HAP-1 (cell line): ENCODE measurements at regions of chr4 and their contacts with region 1.

Region 1: GRCh38 chr4:163042306-163042705 is 124.4 kb downstream of the NAF1 start:
- DNase-seq: no peak
- H3K4me3 ChIP-seq: no peak overlapping the region
- H3K4me1 ChIP-seq: peaks cover 8% of the 10 kb centered on the region; the same call in 1 of the 2 replicates
- H3K27me3 ChIP-seq: no peaks in the 10 kb centered on the region

Region 2: DNA sequence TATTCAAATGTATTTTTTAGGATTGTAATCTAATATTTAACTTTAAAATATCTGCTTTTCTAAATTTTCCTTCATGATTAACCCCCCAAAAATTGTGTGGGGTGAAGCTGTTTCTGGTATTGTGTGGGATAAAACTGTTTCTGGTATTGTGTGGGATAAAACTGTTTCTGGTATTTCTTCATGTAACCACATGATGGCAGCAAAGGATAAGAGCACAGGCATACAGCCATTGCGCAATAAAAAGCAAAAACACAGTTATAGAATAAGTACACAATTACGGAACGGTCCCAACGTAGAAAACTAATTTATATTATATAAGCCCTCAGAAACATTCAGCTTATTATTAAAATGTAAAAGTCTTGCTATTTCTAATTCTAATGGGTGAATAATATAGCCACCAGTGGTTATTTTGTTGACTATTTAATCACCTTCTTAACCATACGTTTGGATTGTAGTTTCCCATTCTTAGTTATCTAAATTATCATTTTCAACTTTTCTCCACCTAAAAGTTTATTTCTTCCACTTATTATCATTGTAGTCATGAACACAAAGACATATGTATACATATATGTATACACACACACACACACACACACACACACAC is 544.6 kb before region 1 on chr4:
- in situ Hi-C with region 1: loop called (anchors 10 kb)
- DNase-seq: peak in 1 of 2 experiments; percentile 59
- H3K4me3 ChIP-seq: no peak overlapping the region
- H3K4me1 ChIP-seq: no peaks in the 10 kb centered on the region
- H3K27me3 ChIP-seq: no peaks in the 10 kb centered on the region

Region 3: DNA sequence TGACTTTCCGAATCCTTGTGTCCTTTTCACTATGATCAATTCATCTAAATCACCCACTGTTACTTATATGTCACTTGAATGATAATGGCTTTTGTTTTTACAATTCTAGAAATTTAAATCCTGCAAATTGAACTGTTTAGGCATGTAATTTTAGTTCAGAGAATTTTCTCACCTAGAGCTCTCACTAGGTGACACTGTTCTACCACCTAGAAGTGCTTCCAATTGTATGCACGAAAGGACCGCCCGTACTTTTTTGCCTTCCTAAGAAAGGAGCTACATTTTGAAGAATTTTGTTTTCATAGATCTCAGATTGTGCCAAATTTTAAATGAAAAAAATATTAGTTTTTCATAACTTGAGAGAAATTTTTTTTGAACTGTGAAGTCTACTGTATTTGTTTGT is 396.9 kb before region 1 on chr4:
- in situ Hi-C with region 1: loop called (anchors 10 kb)
- DNase-seq: peak; percentile 15 to 20
- H3K4me3 ChIP-seq: no peak overlapping the region
- H3K4me1 ChIP-seq: no peaks in the 10 kb centered on the region
- H3K27me3 ChIP-seq: no peaks in the 10 kb centered on the region

Region 4: DNA sequence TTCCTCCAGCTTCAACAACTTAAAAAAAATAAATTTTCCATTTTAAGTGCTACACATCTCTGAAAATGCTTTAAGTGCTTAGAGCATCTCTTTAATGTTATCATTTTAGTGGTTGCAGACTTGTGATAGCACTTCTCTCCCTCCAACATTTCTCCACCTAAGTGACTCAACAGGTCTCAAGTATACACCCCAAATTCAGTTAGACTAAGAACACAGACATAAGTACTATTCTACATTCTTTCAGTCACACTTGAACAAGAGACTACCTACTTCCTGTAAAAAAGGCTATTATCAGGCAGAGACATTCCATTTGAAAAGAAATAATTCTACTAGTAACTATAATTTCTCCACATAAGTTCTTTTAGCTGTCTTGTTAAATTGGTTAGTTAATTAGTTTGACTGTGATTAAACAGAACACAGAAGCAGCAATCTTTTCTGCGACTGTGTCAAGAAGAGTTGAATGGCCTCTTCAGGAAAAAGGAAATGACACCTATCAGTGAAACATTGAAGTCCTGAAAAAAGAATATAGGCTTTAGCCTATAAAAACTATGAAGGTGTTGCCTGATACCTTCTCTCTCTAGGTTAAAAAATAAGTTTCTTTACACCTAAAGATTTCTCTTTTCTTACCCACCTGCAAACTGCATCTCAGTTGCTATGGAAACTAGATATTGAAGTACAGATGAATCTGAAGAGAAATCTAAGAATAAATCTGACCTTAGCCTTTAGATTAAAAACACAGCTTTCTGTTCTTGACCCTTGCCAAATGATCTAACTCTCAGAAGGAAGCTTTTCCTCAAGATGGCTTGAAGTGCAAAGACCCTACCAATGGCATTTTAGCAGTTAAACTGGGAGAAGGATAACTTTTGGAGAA is 106.4 kb after region 1 on chr4:
- in situ Hi-C with region 1: no loop called
- DNase-seq: no peak
- H3K4me3 ChIP-seq: no peak overlapping the region
- H3K4me1 ChIP-seq: no peaks in the 10 kb centered on the region
- H3K27me3 ChIP-seq: no peaks in the 10 kb centered on the region